Esophagus muscularis mucosa (tissue), 4 donors: ENCODE measurements at regions of chr10 and their contacts with region 1.

Region 1: GRCh38 chr10:100338434-100339036 is 8.5 kb upstream of the SCD start:
- DNase-seq: no peak
- H3K4me3 ChIP-seq: no peak overlapping the region
- H3K27ac ChIP-seq: no peak overlapping the region
- H3K4me1 ChIP-seq: peaks cover 0 to 5% (median 0%) of the 10 kb centered on the region in 4 donors
- H3K27me3 ChIP-seq: peaks cover 0 to 28% (median 0%) of the 10 kb centered on the region in 4 donors
- CTCF ChIP-seq: peak; percentile 89 to 91 (median 90)
- EP300 ChIP-seq: no peak
- POLR2A ChIP-seq: no peak

Region 2: GRCh38 chr10:100433253-100434240 is 95.0 kb after region 1 on chr10:
- intact Hi-C with region 1: loop called (anchors 1 kb)
- DNase-seq: peak; percentile 99
- H3K4me3 ChIP-seq: no peak overlapping the region
- H3K27ac ChIP-seq: no peak overlapping the region
- H3K4me1 ChIP-seq: no peaks in the 10 kb centered on the region
- H3K27me3 ChIP-seq: peaks cover 0 to 11% (median 0%) of the 10 kb centered on the region in 4 donors
- CTCF ChIP-seq: peak; percentile 98 to 100 (median 100)
- EP300 ChIP-seq: no peak
- POLR2A ChIP-seq: no peak

Region 3: GRCh38 chr10:100518761-100519241 is 180.3 kb after region 1 on chr10:
- intact Hi-C with region 1: loop called (anchors 2 kb)
- DNase-seq: no peak
- H3K4me3 ChIP-seq: peak overlapping the region; percentile 60 to 69 (median 65)
- H3K27ac ChIP-seq: peak overlapping the region in 3 of 4 donors; percentile 22 to 55 (median 30)
- H3K4me1 ChIP-seq: peaks cover 14 to 21% (median 19%) of the 10 kb centered on the region in 4 donors
- H3K27me3 ChIP-seq: no peaks in the 10 kb centered on the region
- CTCF ChIP-seq: peak; percentile 63 to 72 (median 63)
- EP300 ChIP-seq: no peak
- POLR2A ChIP-seq: no peak